ENCODE measurements at regions of chr2 and their contacts with region 1.

Region 1: DNA sequence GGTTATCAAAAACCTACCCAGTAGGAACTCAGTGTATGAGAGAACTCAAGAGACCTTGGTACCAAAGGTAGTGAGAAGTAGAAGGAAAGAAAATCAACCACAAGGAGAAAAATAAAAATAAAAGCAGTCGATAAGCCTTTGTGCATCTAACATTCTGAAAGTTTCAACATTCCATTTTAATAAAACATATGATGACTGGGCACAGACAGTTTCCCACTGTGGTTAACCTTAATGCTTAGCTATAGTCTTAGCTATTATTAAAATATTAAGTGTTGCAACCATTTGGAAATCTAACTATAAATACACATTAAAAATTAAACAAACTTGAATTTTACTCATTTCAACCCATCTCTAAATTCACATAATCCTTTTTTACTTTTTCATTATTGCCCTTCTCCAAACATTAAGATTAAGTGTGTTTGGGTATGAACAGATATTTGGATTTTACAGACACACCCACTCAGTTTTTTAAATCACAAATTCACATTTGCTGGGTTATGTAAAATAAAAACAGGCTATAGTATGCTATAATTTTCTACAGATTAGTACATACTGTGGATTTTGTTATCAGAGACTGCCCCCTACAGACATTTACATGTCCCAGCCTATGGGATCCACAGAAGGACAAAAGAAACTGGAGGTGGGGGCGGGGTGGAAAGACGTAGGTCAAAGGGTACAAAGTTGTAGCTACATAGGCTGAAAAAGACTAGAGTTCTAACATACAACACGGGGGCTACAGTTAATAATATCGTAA is 32.8 kb downstream of the SRBD1 start:
- DNase-seq: peak; percentile 33
- H3K4me3 Mint-ChIP-seq: no peak overlapping the region
- H3K27ac Mint-ChIP-seq: no peak overlapping the region
- H3K4me1 Mint-ChIP-seq: peaks cover 2% of the 10 kb centered on the region
- H3K27me3 Mint-ChIP-seq: no peaks in the 10 kb centered on the region

Region 2: GRCh38 chr2:44981136-44982108 is 596.8 kb before region 1 on chr2:
- CTCF ChIA-PET with region 1: interaction called, 20 read pairs
- POLR2A ChIA-PET with region 1: no interaction called
- intact Hi-C with region 1: loop called (anchors 1 kb)
- DNase-seq: peak; percentile 75
- H3K4me3 Mint-ChIP-seq: no peak overlapping the region
- H3K27ac Mint-ChIP-seq: no peak overlapping the region
- H3K4me1 Mint-ChIP-seq: peaks cover 3% of the 10 kb centered on the region
- H3K27me3 Mint-ChIP-seq: peaks cover 26% of the 10 kb centered on the region